ENCODE measurements at regions of chr20 and their contacts with region 1.

Region 1: DNA sequence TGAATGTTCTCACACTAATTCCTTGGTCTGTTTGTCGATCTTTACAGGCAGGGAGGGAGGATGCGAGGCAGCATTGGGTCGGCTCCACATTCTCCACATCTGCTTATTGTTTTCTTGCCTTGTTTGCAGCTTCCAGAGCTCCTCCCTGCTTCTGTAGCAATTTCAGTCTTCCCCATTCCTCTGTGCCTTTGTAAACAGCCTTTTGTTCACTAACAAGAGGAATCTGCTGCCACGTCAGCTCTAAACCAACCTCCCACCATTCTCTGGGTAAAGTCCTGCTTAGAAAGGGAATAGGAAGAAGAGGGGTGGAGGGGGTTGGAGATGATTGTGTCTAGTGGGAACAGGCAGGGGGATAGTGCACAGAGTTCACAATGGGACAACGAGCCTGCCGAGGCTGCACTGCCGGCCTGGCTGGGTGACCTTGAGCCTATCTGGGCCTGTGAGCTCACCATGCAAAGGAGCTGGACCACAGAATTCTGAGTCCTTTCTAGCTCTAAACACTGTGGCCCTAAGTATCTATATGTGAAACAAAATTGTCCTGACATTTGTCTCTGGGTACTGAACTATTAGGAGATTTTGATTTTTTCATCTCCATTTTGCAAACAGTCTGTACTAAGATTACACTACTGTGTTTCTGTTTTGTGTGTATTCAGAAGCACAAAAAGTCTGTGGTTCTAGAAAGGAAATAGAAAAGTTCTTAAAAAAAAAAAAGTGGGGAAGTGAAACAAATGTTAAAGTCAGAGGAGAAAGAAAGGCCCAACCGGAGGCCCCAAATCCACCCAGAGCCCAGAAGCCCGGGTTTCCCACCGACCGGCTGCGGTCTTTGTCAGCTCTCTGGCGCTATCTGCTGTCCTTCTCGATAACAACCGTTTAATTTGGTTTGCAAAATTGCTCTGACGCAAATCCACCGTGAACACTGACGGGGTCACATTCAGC is 1.4 kb upstream of the PRND start:
- DNase-seq: peak; percentile 70 to 75 (median 70)
- ATAC-seq: peak; percentile 84 to 94 (median 90)
- H3K4me3 ChIP-seq: no peak overlapping the region
- H3K27ac ChIP-seq: peak overlapping the region in 2 of 3 donors; percentile 33 to 39
- H3K4me1 ChIP-seq: peaks cover 0 to 5% (median 0%) of the 10 kb centered on the region in 4 donors
- H3K27me3 ChIP-seq: no peaks in the 10 kb centered on the region
- CTCF ChIP-seq: peak; percentile 67 to 79 (median 69)
- POLR2A ChIP-seq: no peak

Region 2: GRCh38 chr20:4607287-4607713 is 113.0 kb before region 1 on chr20:
- intact Hi-C with region 1: loop called (anchors 2 to 5 kb)
- DNase-seq: peak in 1 of 3 donors; percentile 57
- ATAC-seq: peak; percentile 81 to 91 (median 86)
- H3K4me3 ChIP-seq: no peak overlapping the region
- H3K27ac ChIP-seq: no peak overlapping the region
- H3K4me1 ChIP-seq: no peaks in the 10 kb centered on the region
- H3K27me3 ChIP-seq: no peaks in the 10 kb centered on the region
- CTCF ChIP-seq: peak; percentile 93 to 96 (median 94)
- POLR2A ChIP-seq: no peak

Region 3: DNA sequence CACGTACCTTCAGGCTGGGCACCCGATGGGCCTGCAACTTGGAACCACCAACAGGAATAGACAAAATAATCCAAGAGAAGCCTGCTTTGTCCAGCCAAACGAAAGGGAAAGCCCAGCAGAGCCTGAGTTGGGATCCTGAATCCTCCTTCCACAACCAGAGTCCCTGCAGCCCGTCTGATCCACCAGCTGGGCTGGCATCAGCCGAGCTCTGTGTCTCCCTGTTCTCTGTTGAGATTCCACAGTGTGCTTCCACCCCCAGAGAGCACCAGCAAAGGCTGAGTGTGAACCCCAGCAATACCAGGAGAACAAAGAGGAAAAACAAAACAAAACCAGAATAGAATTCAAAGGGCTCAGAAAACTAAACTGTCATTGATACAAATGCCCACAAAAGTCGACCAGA is 102.8 kb before region 1 on chr20:
- intact Hi-C with region 1: no loop called
- DNase-seq: no peak
- ATAC-seq: no peak
- H3K4me3 ChIP-seq: no peak overlapping the region
- H3K27ac ChIP-seq: no peak overlapping the region
- H3K4me1 ChIP-seq: no peaks in the 10 kb centered on the region
- H3K27me3 ChIP-seq: no peaks in the 10 kb centered on the region
- CTCF ChIP-seq: no peak
- POLR2A ChIP-seq: no peak

Region 4: GRCh38 chr20:4813863-4814695 is 93.8 kb after region 1 on chr20:
- intact Hi-C with region 1: no loop called
- DNase-seq: no peak
- ATAC-seq: peak; percentile 67 to 78 (median 74)
- H3K4me3 ChIP-seq: peak overlapping the region in 1 of 3 donors; percentile 22
- H3K27ac ChIP-seq: peak overlapping the region; percentile 79 to 86 (median 81)
- H3K4me1 ChIP-seq: no peaks in the 10 kb centered on the region
- H3K27me3 ChIP-seq: no peaks in the 10 kb centered on the region
- CTCF ChIP-seq: no peak
- POLR2A ChIP-seq: no peak